ENCODE measurements at regions of chr5 and their contacts with region 1.

Region 1: GRCh38 chr5:32489791-32490582 is 45.4 kb upstream of the ZFR start:
- DNase-seq: peak; percentile 89
- H3K4me3 ChIP-seq: no peak overlapping the region
- H3K27ac ChIP-seq: no peak overlapping the region
- H3K4me1 ChIP-seq: peaks cover 6% of the 10 kb centered on the region
- H3K27me3 ChIP-seq: no peaks in the 10 kb centered on the region
- CTCF ChIP-seq: peak; percentile 84

Region 2: DNA sequence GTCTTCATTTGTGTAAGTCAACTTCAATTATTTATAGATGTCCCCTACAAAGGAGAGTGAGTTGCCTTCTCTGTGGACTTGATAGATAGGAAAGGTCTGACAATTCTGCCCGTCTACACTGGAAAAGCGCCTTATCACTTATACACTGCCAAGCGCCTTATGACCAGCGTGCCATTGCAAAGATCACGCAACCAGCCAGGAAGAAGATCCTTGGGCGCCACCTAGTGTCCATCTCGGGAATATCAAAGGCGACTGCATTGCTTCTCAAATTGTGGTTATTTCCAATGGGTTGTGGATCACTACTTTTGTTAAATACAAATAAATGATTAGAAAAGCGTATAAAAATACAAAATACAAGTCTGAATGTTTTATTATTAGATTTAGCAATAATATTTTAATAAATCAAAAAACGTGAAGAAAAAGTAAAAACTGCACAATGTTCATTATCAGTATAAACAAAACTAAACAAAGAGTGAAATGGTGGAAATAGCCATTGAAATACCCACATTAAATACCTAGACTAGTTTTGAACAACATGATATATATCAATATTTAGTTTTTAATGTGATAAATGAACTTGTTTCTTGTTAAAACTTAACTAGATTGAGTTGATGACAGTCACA is 123.2 kb after region 1 on chr5:
- CTCF ChIA-PET with region 1: interaction called, 6 read pairs
- POLR2A ChIA-PET with region 1: no interaction called
- intact Hi-C with region 1: loop called (anchors 1 kb)
- DNase-seq: peak; percentile 87
- H3K4me3 ChIP-seq: peak overlapping the region; percentile 2
- H3K27ac ChIP-seq: peak overlapping the region; percentile 9
- H3K4me1 ChIP-seq: peaks cover 9% of the 10 kb centered on the region
- H3K27me3 ChIP-seq: no peaks in the 10 kb centered on the region
- CTCF ChIP-seq: peak; percentile 92

Region 3: GRCh38 chr5:33180900-33181299 is 690.9 kb after region 1 on chr5:
- CTCF ChIA-PET with region 1: no interaction called
- POLR2A ChIA-PET with region 1: no interaction called
- intact Hi-C with region 1: loop called (anchors 5 kb)
- DNase-seq: peak; percentile 25
- H3K4me3 ChIP-seq: no peak overlapping the region
- H3K27ac ChIP-seq: no peak overlapping the region
- H3K4me1 ChIP-seq: no peaks in the 10 kb centered on the region
- H3K27me3 ChIP-seq: no peaks in the 10 kb centered on the region
- CTCF ChIP-seq: peak; percentile 55; the same call in 1 of the 2 replicates

Measured in A673 (cell line).